CD8-positive, alpha-beta T cell (primary cell): ENCODE measurements at regions of chr12 and their contacts with region 1.

Region 1: DNA sequence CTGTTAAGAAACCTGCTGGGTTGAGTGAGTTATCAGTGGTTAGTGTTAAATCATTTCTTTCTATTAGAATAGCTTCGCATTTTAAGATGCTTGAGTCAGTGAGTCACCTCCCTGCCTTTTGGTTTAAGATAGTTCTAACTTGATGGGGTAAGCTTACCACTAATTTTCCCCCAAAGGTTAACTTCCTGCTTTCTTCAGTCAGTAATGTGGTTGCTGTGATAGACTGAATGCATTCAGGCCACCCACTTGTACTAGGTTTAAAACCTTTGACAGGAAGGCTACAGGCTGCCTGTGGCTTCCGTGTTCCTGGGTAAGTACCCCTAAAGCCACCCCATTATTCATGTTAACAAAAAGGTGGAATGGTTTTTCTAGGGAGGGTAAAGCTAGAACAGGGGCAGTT is 25.3 kb downstream of the CLEC2A start:
- DNase-seq: peak in 8 of 9 experiments; percentile 15 to 86 (median 59)
- ATAC-seq: peak; percentile 96
- H3K4me3 ChIP-seq: peak overlapping the region in 1 of 2 experiments; percentile 8
- H3K4me3 Mint-ChIP-seq: peak overlapping the region; percentile 49
- H3K27ac ChIP-seq: peak overlapping the region in 1 of 2 experiments; percentile 3
- H3K27ac Mint-ChIP-seq: peak overlapping the region; percentile 82
- H3K4me1 ChIP-seq: peaks cover 28% of the 10 kb centered on the region
- H3K4me1 Mint-ChIP-seq: peaks cover 36% of the 10 kb centered on the region
- H3K27me3 ChIP-seq: no peaks in the 10 kb centered on the region
- H3K27me3 Mint-ChIP-seq: no peaks in the 10 kb centered on the region
- CTCF ChIP-seq: no peak

Region 2: DNA sequence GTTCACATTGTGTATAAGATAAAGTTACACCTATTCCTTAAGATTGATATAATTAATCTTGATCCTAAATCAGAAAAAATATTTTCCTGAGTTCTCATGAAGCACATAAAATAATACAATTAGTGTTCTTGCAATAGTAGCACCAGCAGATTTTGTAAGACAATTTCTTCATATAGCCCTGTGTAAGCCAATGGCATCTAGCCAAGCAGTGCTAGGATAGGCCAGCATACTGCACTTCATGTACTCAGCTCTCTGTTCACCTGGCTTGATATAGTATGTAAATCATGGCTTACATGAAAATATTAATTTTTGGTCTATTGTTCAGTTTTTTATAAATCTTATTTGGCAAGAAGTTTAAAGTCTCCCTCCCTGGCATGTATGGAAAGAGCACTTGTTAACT is 23.7 kb before region 1 on chr12:
- CTCF ChIA-PET with region 1: interaction called, 3 read pairs
- POLR2A ChIA-PET with region 1: interaction called, 4 read pairs
- intact Hi-C with region 1: loop called in 1 of 2 experiments (anchors 2 kb)
- DNase-seq: no peak
- ATAC-seq: no peak
- H3K4me3 ChIP-seq: no peak overlapping the region
- H3K4me3 Mint-ChIP-seq: no peak overlapping the region
- H3K27ac ChIP-seq: no peak overlapping the region
- H3K27ac Mint-ChIP-seq: no peak overlapping the region
- H3K4me1 ChIP-seq: no peaks in the 10 kb centered on the region
- H3K4me1 Mint-ChIP-seq: peaks cover 11% of the 10 kb centered on the region
- H3K27me3 ChIP-seq: no peaks in the 10 kb centered on the region
- H3K27me3 Mint-ChIP-seq: no peaks in the 10 kb centered on the region
- CTCF ChIP-seq: no peak

Region 3: GRCh38 chr12:9925708-9926393 is 19.0 kb after region 1 on chr12:
- CTCF ChIA-PET with region 1: interaction called, 11 read pairs
- POLR2A ChIA-PET with region 1: interaction called, 3 read pairs
- intact Hi-C with region 1: no loop called
- DNase-seq: peak in 6 of 9 experiments; percentile 5 to 74 (median 44)
- ATAC-seq: peak; percentile 59
- H3K4me3 ChIP-seq: peak overlapping the region; percentile 21 to 28
- H3K4me3 Mint-ChIP-seq: peak overlapping the region; percentile 77
- H3K27ac ChIP-seq: no peak overlapping the region
- H3K27ac Mint-ChIP-seq: peak overlapping the region; percentile 18
- H3K4me1 ChIP-seq: no peaks in the 10 kb centered on the region
- H3K4me1 Mint-ChIP-seq: peaks cover 12% of the 10 kb centered on the region
- H3K27me3 ChIP-seq: peaks cover 0 to 2% of the 10 kb centered on the region in 2 experiments
- H3K27me3 Mint-ChIP-seq: no peaks in the 10 kb centered on the region
- CTCF ChIP-seq: peak; percentile 62